ENCODE measurements at regions of chr4 and their contacts with region 1.

Region 1: DNA sequence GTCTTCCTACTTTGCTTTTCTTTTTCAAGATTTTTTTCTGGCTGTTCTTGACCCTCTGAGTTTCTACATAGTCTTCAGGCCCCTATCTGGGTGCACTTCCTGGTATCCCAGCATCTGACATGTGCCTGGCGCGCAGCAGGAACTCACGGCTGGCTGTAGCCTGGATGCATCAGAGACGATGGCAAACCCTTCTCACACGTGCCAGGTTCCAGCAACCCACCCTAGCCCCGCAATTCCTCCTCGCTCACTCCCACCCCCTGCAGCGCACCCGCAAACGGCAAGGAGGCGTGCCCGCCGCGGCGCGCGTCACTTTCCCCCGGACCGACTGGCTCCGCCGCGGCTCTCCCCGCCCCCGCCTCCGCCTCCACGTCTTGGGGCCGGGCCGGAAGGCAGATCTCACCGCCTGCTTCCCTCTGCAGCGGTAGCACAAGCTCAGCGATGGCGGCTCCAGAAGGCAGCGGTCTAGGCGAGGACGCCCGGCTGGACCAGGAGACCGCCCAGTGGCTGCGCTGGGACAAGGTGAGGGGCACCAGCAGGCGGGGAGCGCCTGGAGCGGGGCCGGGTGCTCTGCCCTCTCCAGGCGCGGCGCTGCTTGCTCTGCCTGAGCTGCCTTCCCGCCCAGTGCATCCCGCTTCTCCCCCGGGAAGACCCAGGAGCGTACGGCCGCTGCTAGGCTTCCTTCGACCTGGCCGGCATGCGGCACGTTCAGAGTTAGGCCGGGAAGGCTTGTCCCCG is at the start of gene PGM2:
- DNase-seq: peak; percentile 87 to 91 (median 88)
- ATAC-seq: peak; percentile 96
- H3K4me3 ChIP-seq: peak within 1 kb of the TSS; percentile 71
- H3K27ac ChIP-seq: peak within 1 kb of the TSS; percentile 62
- H3K4me1 ChIP-seq: peaks cover 4 to 11% of the 10 kb centered on the region in 2 experiments; a peak in 4 of 5 replicates
- H3K27me3 ChIP-seq: no peaks in the 10 kb centered on the region
- CTCF ChIP-seq: peak in 1 of 3 experiments; percentile 17; a peak in 2 of 6 replicates
- EP300 ChIP-seq: no peak; the same call in 1 of the 2 replicates
- POLR2A ChIP-seq: peak; percentile 93
- RAD21 ChIP-seq: no peak; a peak in 1 of 4 replicates
- polyA plus RNA-seq, gene PGM2: 15.2 to 27.1 TPM

Region 2: GRCh38 chr4:37812710-37813109 is 13.8 kb before region 1 on chr4:
- CTCF ChIA-PET with region 1: no interaction called
- POLR2A ChIA-PET with region 1: interaction called, 10 read pairs
- in situ Hi-C with region 1: no loop called
- intact Hi-C with region 1: no loop called
- DNase-seq: no peak
- ATAC-seq: no peak
- H3K4me3 ChIP-seq: no peak overlapping the region
- H3K27ac ChIP-seq: no peak overlapping the region
- H3K4me1 ChIP-seq: no peaks in the 10 kb centered on the region
- H3K27me3 ChIP-seq: peaks cover 2 to 10% of the 10 kb centered on the region in 2 experiments
- CTCF ChIP-seq: no peak
- EP300 ChIP-seq: no peak
- POLR2A ChIP-seq: no peak
- RAD21 ChIP-seq: no peak

Region 3: DNA sequence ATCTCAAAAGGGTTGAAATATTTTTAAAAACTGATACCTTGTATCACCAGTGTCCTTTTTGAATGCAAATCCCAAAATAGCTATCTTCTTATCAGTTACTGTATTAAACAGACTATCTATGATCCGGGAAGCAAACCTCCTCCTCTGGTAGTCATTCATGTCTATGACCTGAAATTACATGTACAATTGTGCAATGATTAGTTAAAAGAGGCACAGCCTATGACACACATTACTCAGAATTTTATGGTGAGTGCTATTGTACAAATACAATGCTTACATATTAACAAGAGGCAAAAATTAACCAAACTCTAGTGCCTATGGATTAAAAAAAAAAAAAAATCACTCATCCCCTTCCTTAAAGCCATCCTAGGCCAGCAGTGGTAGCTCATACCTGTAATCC is 1679.1 kb after region 1 on chr4:
- CTCF ChIA-PET with region 1: no interaction called
- POLR2A ChIA-PET with region 1: no interaction called
- in situ Hi-C with region 1: no loop called
- intact Hi-C with region 1: no loop called
- DNase-seq: no peak
- ATAC-seq: no peak
- H3K4me3 ChIP-seq: no peak overlapping the region
- H3K27ac ChIP-seq: no peak overlapping the region
- H3K4me1 ChIP-seq: no peaks in the 10 kb centered on the region
- H3K27me3 ChIP-seq: no peaks in the 10 kb centered on the region
- CTCF ChIP-seq: no peak
- EP300 ChIP-seq: no peak
- POLR2A ChIP-seq: no peak
- RAD21 ChIP-seq: no peak